ENCODE measurements at regions of chr3 and their contacts with region 1.

Region 1: DNA sequence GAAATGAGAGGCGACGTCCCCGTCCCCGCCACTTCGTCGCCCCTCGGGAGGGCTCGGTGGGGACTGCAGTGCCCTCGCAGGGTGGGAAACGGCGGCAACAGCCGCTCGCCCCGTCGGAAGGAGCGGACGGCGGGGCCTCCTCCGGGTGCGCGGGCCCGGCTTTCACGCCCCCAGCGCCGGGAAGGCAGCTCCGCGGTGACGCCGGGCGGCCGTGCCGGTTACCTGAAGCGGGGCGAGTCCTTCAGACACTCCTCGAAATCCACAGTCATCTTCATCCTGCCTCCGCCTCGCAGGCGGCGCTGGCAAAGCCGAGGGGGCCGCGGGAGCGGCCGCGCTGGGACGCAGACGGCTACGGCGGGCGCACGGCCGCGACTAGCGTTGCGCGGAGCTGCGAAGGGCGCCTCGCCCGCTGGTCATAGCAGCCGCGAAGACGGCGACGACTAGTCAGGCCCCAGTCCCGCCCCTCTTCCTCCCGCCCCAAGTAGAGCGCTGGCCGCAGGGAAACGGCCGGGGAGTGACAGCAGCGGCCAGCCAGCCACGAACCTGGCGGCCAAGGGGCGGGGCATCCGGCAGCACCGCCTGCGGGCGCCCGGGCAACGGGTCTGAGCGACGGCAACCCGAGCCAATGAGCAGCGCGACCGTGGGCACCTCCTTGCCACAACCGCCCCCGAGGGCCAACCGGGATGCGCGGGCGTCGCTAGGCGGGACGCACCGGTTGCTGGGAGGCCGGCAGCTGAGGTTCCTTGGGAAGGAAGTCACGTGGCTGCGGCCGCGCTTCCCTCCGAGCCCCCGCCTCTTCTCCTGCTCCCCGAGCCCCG is at the start of gene ACAP2:
- DNase-seq: peak; percentile 100

Region 2: GRCh38 chr3:195271116-195271858 is 171.5 kb before region 1 on chr3 and contains the start of gene XXYLT1:
- intact Hi-C with region 1: loop called (anchors 2 kb)
- DNase-seq: peak; percentile 79 to 98 (median 88)

Region 3: DNA sequence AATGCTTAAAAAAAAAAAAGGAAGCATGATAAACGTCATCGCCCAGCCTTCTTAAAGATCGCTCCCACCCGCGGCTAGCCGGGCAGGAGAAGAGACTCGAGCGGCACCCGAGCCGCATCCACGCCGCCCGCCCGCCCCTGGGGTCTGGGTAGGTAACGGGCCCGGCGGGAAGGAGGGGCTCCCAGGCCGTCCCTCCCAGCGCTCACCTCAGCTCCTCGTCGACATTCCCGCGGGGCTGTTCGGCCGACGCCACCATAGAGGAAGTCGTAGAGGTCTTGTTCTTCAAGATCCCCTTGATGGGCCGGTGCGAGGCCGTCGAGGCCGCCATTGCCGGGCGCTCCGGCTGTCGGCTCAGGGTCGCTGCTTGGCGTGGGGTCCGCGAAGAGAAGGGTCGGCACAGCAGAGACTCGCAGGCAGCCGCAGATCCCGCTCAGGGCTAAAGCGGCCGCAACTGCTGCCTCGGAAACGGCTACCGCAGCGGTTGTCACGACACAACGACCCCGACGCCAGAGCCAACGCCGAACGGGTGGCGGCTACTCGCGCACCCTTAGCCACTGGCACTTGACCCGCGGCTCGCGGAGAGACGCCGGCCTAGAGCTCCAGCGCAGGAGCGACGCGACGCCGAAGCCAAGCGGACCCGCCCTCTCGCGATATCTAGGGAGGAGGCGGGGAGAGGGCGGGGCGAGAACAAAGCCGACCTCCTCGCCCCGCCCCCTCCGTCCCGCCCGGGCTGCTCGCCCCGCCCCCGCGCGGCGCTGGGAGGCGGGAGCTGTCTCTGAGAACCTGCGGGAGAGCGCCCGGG is 100.1 kb after region 1 on chr3 and contains the start of gene PPP1R2:
- intact Hi-C with region 1: loop called (anchors 5 kb)
- DNase-seq: peak; percentile 85 to 99 (median 92)

Measured in posterior cingulate gyrus (tissue), 11 donors.